Naive thymus-derived CD4-positive, alpha-beta T cell (primary cell): ENCODE measurements at regions of chr17 and their contacts with region 1.

Region 1: DNA sequence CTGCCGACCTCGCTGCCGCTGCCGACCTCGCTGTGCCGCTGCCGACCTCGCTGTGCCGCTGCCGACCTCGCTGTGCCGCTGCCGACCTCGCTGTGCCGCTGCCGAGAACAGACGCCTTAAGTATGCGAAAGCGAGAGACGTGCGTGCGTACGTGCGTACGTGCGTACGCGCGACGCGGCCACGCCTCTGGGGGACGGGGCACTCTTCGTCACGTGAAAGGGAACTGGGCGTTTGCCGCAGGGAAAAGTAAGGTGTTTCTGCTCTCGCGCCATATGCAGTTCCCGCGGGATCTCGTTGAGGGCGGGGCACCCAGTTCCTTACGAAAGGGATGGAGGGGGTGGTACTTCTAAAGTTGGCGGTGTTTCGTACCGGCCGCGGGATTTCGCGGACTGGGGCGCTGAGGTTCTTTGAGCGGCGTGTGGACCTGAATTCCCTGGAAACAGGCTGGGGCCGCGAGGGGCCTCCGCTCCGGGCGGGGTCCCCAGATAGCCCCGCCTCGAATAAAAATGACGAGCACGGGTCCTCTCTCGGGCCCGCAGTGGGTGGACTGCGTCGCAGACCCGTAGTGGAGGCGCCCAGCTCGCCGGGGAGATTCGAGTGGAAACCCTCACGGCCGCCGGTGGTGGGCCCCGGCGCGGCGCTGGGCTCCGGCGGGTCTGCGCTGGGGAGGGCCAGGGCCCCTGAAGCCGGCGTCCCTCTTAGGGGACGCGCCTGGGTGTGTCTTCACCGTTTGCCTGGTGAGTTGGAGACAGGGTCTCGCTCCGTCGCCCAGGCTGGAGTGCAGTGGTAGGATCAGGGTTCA is at the start of gene EIF4A3:
- DNase-seq: peak; percentile 84 to 98 (median 96)
- ATAC-seq: peak; percentile 97
- H3K4me3 ChIP-seq: peak within 1 kb of the TSS; percentile 64
- H3K4me3 Mint-ChIP-seq: peak within 1 kb of the TSS; percentile 81 to 100 (median 98)
- H3K27ac ChIP-seq: peak within 1 kb of the TSS; percentile 91
- H3K27ac Mint-ChIP-seq: peak within 1 kb of the TSS; percentile 68 to 100 (median 97)
- H3K4me1 ChIP-seq: peaks cover 19 to 21% of the 10 kb centered on the region in 2 donors
- H3K4me1 Mint-ChIP-seq: peaks cover 15 to 59% (median 44%) of the 10 kb centered on the region in 7 donors
- H3K27me3 ChIP-seq: no peaks in the 10 kb centered on the region
- H3K27me3 Mint-ChIP-seq: no peaks in the 10 kb centered on the region
- total RNA-seq, gene EIF4A3: 48.6 to 128 (median 75.9) TPM

Region 2: GRCh38 chr17:80101011-80101945 is 46.0 kb before region 1 on chr17 and contains the start of gene GAA:
- CTCF ChIA-PET with region 1: interaction called, 6 read pairs
- POLR2A ChIA-PET with region 1: interaction called, 21 read pairs
- intact Hi-C with region 1: loop called (anchors 1 kb)
- DNase-seq: peak; percentile 84 to 97 (median 91)
- ATAC-seq: peak; percentile 97
- H3K4me3 ChIP-seq: peak within 1 kb of the TSS; percentile 79
- H3K4me3 Mint-ChIP-seq: peak within 1 kb of the TSS; percentile 85 to 93 (median 90)
- H3K27ac ChIP-seq: peak within 1 kb of the TSS; percentile 86
- H3K27ac Mint-ChIP-seq: peak within 1 kb of the TSS; percentile 81 to 93 (median 86)
- H3K4me1 ChIP-seq: peaks cover 10 to 16% of the 10 kb centered on the region in 2 donors
- H3K4me1 Mint-ChIP-seq: peaks cover 20 to 30% (median 27%) of the 10 kb centered on the region in 7 donors
- H3K27me3 ChIP-seq: no peaks in the 10 kb centered on the region
- H3K27me3 Mint-ChIP-seq: peaks cover 0 to 10% (median 0%) of the 10 kb centered on the region in 5 donors
- total RNA-seq, gene GAA: 18.5 to 67.8 (median 54.6) TPM

Region 3: GRCh38 chr17:80219013-80219762 is 72.0 kb after region 1 on chr17:
- CTCF ChIA-PET with region 1: no interaction called
- POLR2A ChIA-PET with region 1: interaction called, 4 read pairs
- intact Hi-C with region 1: loop called in 1 of 2 experiments (anchors 1 kb)
- DNase-seq: peak; percentile 77 to 90 (median 86)
- ATAC-seq: peak; percentile 90
- H3K4me3 ChIP-seq: peak overlapping the region; percentile 84
- H3K4me3 Mint-ChIP-seq: peak overlapping the region; percentile 86 to 96 (median 92)
- H3K27ac ChIP-seq: peak overlapping the region; percentile 93
- H3K27ac Mint-ChIP-seq: peak overlapping the region; percentile 86 to 98 (median 95)
- H3K4me1 ChIP-seq: peaks cover 13 to 30% of the 10 kb centered on the region in 2 donors
- H3K4me1 Mint-ChIP-seq: peaks cover 21 to 40% (median 26%) of the 10 kb centered on the region in 7 donors
- H3K27me3 ChIP-seq: no peaks in the 10 kb centered on the region
- H3K27me3 Mint-ChIP-seq: peaks cover 0 to 3% (median 0%) of the 10 kb centered on the region in 5 donors

Region 4: DNA sequence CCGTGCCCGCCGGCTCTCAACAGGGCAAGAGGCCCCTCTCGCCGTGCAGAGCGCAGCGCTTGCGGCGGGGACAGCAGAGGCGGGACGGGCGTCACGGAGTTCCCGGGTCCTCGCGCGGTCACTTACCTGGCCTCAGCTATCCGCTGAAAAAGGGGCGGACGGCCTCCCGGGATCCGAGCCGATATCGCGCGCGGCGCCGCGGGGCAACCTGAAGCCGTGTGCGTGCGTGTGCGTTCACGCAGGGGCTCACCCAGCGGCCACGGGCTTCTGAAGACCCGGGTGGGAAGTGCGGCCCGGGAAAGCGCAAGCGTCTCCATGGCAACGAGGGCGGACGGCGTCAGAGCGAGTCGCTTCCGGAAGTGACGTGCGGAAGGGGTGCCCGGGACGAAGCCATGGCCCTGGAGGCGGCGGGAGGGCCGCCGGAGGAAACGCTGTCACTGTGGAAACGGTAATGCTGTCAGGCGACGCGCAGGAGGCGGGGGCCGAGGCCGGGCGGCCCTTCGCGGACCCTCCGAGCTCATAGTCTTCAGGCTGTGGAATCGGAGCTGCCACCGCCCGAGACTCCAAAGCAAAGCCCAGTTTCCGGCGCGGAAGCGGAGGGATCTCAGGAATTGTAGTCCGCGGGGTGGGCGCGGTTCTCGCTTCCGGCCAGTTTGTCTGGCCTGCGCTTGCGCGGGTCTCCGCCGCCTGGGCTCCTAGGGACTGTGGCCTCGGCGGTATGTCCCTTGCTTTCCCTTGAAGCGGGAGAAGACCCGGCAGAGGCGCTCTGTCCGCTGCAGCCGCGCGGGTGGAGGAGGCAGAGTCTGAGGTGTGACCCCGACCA is 267.8 kb after region 1 on chr17 and contains the start of gene ENDOV:
- CTCF ChIA-PET with region 1: no interaction called
- POLR2A ChIA-PET with region 1: no interaction called
- intact Hi-C with region 1: loop called (anchors 1 kb)
- DNase-seq: peak; percentile 87 to 97 (median 92)
- ATAC-seq: peak; percentile 94
- H3K4me3 ChIP-seq: peak within 1 kb of the TSS; percentile 74
- H3K4me3 Mint-ChIP-seq: peak within 1 kb of the TSS; percentile 78 to 92 (median 88)
- H3K27ac ChIP-seq: peak within 1 kb of the TSS; percentile 83
- H3K27ac Mint-ChIP-seq: peak within 1 kb of the TSS; percentile 47 to 94 (median 77)
- H3K4me1 ChIP-seq: peaks cover 4 to 16% of the 10 kb centered on the region in 2 donors
- H3K4me1 Mint-ChIP-seq: peaks cover 12 to 40% (median 32%) of the 10 kb centered on the region in 7 donors
- H3K27me3 ChIP-seq: peaks cover 0 to 4% of the 10 kb centered on the region in 2 donors
- H3K27me3 Mint-ChIP-seq: peaks cover 5 to 32% (median 15%) of the 10 kb centered on the region in 5 donors
- total RNA-seq, gene ENDOV: 20.3 to 26.5 (median 21.7) TPM